GM13976 (cell line): ENCODE measurements at regions of chr1 and their contacts with region 1.

Region 1: GRCh38 chr1:28409090-28409489 is 39.5 kb downstream of the PHACTR4 start:
- DNase-seq: no peak
- CTCF ChIP-seq: no peak

Region 2: DNA sequence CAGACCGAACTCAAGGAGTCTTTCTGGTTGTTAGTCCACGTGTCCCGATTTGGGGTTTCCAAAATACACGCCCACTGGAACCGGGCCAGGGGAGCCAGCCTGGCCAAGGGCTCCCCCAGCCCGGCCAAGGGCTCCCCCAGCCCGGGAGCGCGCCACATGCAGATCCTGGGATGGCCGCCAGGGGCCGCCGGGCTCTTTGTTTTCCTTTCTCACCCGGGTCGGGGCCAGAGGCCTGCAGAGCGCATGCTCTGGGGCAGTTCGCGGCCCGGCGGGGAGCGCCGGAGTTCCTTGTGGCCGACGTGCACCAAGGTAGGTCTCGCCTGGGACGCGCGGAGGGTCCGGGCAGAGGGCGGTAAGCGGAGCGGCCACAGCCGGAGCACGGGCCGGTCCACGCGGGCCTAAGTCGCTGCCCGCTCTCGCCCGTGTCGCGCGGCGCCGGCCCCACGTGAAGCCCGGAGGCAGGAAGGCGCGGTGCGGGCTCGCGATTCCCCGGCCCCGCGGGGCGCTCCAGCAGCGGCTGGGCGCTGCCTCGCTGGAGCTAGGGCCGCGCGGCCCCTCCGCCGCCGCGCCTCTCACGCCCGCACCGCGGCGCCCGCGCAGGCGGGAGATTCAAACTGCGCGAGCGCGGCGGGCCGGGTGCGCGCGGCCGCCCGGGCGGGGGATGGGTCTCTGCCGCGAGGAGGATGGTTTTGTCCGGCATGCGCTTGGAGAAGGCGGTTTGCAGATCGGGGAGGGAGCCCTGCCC is 109.1 kb after region 1 on chr1:
- in situ Hi-C with region 1: loop called (anchors 10 kb)
- DNase-seq: peak; percentile 90
- CTCF ChIP-seq: peak; percentile 96

Region 3: GRCh38 chr1:28613175-28613574 is 204.1 kb after region 1 on chr1:
- in situ Hi-C with region 1: loop called (anchors 10 kb)
- DNase-seq: no peak
- CTCF ChIP-seq: no peak